ENCODE measurements at regions of chr3 and their contacts with region 1.

Region 1: DNA sequence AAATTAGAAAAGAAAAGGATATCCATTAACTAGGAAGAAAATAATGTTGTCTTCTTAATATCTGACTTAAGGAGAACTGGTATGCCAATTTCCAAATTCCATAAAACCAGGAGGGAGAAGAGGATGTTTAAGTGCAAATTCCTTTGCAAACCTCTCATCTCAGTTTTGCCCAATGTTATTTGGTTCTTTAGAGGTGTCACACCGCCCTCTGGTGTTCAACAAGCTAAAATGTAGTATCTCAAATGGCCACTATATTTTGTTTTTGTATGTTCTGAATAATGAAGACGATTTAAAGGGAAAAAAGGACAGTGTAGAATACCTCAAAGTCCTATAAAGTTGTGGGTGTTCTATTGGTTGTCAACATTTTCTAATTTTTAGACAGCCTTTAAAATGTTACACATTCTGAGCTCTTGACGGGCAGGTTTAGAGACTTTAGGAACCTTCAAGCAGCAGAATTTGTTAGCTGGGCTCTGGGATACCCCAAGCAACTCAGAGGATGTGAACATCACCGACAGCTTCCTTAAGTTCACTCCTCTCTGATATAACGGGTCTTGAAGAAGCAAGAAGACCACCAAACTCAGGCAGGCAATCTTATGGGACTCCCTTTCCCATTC is 458.3 kb downstream of the MFSD1 start:
- DNase-seq: peak in 3 of 10 donors; percentile 26 to 50 (median 28)
- H3K4me3 ChIP-seq: no peak overlapping the region
- H3K27ac ChIP-seq: no peak overlapping the region
- H3K27me3 ChIP-seq: no peaks in the 10 kb centered on the region
- CTCF ChIP-seq: peak; percentile 69 to 98 (median 90)

Region 2: GRCh38 chr3:158727206-158728060 is 532.7 kb before region 1 on chr3:
- intact Hi-C with region 1: loop called in 1 of 2 experiments (anchors 5 kb)
- DNase-seq: peak in 2 of 10 donors; percentile 37 to 56
- H3K4me3 ChIP-seq: peak overlapping the region in 29 of 59 donors; percentile 2 to 53 (median 30)
- H3K27ac ChIP-seq: peak overlapping the region in 6 of 59 donors; percentile 16 to 55 (median 21)
- H3K27me3 ChIP-seq: no peaks in the 10 kb centered on the region
- CTCF ChIP-seq: peak; percentile 54 to 97 (median 88)

Region 3: GRCh38 chr3:158918008-158918407 is 342.1 kb before region 1 on chr3:
- intact Hi-C with region 1: loop called (anchors 5 to 10 kb)
- DNase-seq: peak in 7 of 10 donors; percentile 25 to 66 (median 47)
- H3K4me3 ChIP-seq: no peak overlapping the region
- H3K27ac ChIP-seq: no peak overlapping the region
- H3K27me3 ChIP-seq: no peaks in the 10 kb centered on the region
- CTCF ChIP-seq: peak in 54 of 56 donors; percentile 27 to 73 (median 56)

Region 4: DNA sequence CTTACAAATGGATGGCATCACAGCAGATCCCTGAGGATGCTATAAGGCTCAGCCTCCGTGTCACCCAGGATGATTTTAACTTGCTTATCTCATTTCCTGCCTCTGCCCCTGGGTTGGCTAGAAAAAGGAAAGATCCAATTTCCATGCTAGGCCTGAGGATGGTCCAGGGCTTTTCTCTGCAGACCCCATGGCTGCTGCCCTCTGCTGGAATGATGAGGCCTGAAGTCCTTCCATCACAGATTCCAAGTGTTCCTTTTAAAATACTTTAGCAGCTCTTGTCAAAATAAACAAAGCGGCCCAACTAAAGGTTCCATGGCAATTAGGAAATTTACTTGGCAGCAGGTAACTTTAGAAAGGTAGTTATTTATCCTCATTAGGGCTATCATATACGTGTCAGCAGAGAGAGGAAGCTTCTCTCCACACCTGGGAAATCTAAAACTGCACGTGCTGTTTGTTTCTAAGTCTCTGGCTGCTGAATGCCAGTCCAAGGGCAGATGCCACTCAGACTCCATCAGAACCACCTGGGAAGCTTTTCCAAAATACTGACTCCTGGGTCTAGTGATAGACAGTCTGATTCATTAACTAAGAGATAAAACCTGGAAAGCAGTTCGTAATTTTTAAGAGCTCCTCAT is 326.5 kb after region 1 on chr3:
- intact Hi-C with region 1: loop called (anchors 5 to 10 kb)
- DNase-seq: peak in 1 of 10 donors; percentile 16
- H3K4me3 ChIP-seq: no peak overlapping the region
- H3K27ac ChIP-seq: no peak overlapping the region
- H3K27me3 ChIP-seq: no peaks in the 10 kb centered on the region
- CTCF ChIP-seq: peak in 53 of 56 donors; percentile 18 to 67 (median 46)

Region 5: DNA sequence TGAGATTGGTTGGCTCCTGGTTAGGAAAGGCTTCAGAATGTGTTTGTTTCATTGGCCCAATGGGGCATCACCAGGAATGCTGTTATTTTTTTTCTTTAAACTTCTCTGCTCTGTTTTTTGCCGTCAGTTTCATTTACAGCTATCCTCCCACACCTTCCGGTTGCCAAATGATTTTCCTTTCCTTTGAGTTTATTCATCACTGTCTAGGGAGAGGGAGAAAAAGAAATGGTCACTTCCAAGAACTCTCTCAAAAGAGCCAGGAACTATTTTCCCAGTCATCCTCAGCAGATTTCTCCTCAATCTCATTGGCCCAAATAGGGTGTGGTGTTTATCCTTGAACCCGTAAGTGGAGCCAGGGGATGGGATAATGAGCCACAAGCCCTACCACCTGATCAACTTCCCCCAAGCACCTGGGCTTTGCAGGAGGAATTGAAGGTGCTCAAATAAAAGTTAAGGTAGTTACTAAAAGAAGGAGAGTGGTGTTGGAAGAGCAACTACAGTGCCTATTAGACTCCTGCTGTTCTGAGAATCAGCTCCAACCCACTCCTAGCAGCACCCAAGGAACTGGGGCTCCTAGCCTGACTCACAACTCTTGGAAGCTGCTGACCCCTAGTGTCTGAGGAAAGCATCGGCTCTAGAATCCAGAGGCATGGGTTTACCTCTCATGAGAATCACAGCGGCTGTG is 544.7 kb after region 1 on chr3:
- intact Hi-C with region 1: loop called (anchors 2 to 10 kb)
- DNase-seq: peak in 9 of 10 donors; percentile 65 to 89 (median 81)
- H3K4me3 ChIP-seq: peak overlapping the region in 3 of 59 donors; percentile 5 to 10 (median 6)
- H3K27ac ChIP-seq: peak overlapping the region in 53 of 59 donors; percentile 6 to 98 (median 64)
- H3K27me3 ChIP-seq: no peaks in the 10 kb centered on the region
- CTCF ChIP-seq: peak; percentile 67 to 96 (median 90)

Region 6: GRCh38 chr3:160003520-160004128 is 743.5 kb after region 1 on chr3:
- intact Hi-C with region 1: loop called (anchors 5 to 10 kb)
- DNase-seq: peak; percentile 28 to 81 (median 68)
- H3K4me3 ChIP-seq: peak overlapping the region in 8 of 59 donors; percentile 11 to 39 (median 23)
- H3K27ac ChIP-seq: peak overlapping the region in 10 of 59 donors; percentile 1 to 63 (median 34)
- H3K27me3 ChIP-seq: no peaks in the 10 kb centered on the region
- CTCF ChIP-seq: peak in 55 of 56 donors; percentile 28 to 90 (median 72)

Measured in dorsolateral prefrontal cortex (tissue), 120 donors.